Activated B cell treated with CpG ODN at 0.5 μM for 24 hours (primary cell): ENCODE measurements at regions of chr7 and their contacts with region 1.

Region 1: DNA sequence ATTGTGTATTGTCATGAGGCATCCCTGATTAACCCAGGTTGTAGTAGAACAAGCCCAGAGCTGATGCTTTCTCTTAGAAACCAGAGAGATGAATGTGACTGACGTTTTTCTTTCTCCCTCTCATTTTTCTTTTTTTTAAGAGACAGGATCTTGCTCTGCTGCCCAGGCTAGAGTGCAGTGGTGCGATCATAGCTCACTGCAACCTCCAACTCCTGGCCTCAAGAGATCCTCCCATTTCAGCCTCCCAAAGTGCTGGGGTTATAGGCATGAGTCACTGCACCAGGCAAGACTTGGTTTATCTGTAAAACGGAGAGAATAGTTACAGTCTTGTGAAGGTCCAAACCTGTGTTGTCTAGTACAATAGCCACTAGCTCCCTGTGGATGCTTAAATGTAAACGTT is 5.4 kb downstream of the LMTK2 start:
- DNase-seq: no peak
- ATAC-seq: no peak
- H3K4me3 Mint-ChIP-seq: no peak overlapping the region
- H3K27ac Mint-ChIP-seq: no peak overlapping the region
- H3K4me1 Mint-ChIP-seq: peaks cover 7% of the 10 kb centered on the region
- H3K27me3 Mint-ChIP-seq: no peaks in the 10 kb centered on the region
- CTCF ChIP-seq: no peak

Region 2: DNA sequence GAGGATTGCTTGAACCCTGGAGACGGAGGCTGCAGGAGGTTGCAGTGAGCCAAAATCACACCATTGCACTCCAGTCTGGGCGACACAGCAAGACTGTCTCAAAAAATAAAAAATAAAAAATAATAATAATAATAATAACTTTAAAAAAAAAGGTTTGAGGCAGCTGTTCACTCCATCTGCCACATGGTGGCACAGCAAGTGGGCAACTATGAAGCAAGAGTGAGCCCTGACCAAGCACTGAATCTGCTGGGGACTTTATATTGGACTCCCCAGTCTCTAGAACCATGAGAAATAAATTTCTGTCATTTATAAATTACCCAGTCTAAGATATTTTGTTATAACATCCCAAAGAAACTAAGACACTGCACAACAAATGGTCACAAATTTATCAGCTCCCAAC is 154.8 kb after region 1 on chr7:
- CTCF ChIA-PET with region 1: no interaction called
- POLR2A ChIA-PET with region 1: interaction called, 15 read pairs
- intact Hi-C with region 1: no loop called
- DNase-seq: no peak
- ATAC-seq: peak; percentile 28
- H3K4me3 Mint-ChIP-seq: no peak overlapping the region
- H3K27ac Mint-ChIP-seq: no peak overlapping the region
- H3K4me1 Mint-ChIP-seq: no peaks in the 10 kb centered on the region
- H3K27me3 Mint-ChIP-seq: no peaks in the 10 kb centered on the region
- CTCF ChIP-seq: no peak